ENCODE measurements at regions of chr11 and their contacts with region 1.

Region 1: DNA sequence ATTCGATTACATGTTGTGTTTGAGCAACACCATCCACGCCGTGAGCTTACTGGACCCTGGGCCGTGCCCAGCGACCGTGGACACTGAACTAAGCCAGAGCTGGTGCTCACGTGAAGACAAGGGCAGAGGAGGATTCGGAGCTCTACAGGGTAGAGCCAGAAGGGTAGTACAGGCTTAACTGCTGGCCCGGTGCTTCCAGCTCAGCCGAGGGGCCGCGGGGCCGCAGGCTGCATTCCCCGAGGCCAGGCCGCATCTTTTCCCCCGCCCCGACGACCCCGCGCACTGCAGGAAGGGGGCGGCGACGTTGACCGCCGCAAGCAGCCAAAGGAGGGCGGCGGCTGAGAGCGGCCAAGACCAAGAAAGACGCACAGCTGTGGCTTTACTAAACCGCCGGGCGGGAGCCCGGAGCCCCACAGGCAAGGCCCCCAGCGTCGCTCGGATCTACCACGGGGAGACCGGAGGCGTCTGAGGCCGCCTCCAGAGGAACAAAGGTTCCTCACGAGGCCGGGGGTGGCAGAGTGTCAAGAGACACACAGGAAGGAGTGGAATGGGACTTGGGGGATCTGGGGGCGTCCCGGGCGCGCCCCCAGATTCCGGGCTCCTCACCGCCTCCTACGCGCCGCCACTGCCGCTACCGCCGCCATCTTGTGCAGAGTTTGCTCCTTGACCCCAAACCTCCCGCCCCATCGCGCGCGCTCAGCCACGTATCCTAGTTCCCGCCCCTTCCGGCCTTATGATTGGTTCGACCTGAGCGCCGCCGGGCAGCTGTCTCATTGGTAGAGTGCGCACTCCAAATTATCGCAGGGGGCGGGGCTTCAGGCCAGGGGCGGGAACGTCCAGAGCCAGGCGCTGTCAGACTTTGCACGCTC is at the start of gene GANAB:
- DNase-seq: peak; percentile 97 to 100 (median 99)
- ATAC-seq: peak; percentile 98
- H3K4me3 ChIP-seq: peak within 1 kb of the TSS; percentile 98
- H3K4me3 Mint-ChIP-seq: peak within 1 kb of the TSS; percentile 96
- H3K27ac ChIP-seq: peak within 1 kb of the TSS; percentile 82 to 97
- H3K27ac Mint-ChIP-seq: peak within 1 kb of the TSS; percentile 99
- H3K4me1 ChIP-seq: peaks cover 42% of the 10 kb centered on the region
- H3K4me1 Mint-ChIP-seq: peaks cover 29% of the 10 kb centered on the region
- H3K27me3 ChIP-seq: no peaks in the 10 kb centered on the region
- H3K27me3 Mint-ChIP-seq: no peaks in the 10 kb centered on the region
- CTCF ChIP-seq: no peak
- total RNA-seq, gene GANAB: 181 to 182 TPM

Region 2: GRCh38 chr11:62256281-62256680 is 389.9 kb before region 1 on chr11:
- CTCF ChIA-PET with region 1: no interaction called
- POLR2A ChIA-PET with region 1: no interaction called
- intact Hi-C with region 1: no loop called
- DNase-seq: no peak
- ATAC-seq: no peak
- H3K4me3 ChIP-seq: no peak overlapping the region
- H3K4me3 Mint-ChIP-seq: no peak overlapping the region
- H3K27ac ChIP-seq: no peak overlapping the region
- H3K27ac Mint-ChIP-seq: no peak overlapping the region
- H3K4me1 ChIP-seq: no peaks in the 10 kb centered on the region
- H3K4me1 Mint-ChIP-seq: no peaks in the 10 kb centered on the region
- H3K27me3 ChIP-seq: no peaks in the 10 kb centered on the region
- H3K27me3 Mint-ChIP-seq: peaks cover 30% of the 10 kb centered on the region
- CTCF ChIP-seq: no peak

Region 3: DNA sequence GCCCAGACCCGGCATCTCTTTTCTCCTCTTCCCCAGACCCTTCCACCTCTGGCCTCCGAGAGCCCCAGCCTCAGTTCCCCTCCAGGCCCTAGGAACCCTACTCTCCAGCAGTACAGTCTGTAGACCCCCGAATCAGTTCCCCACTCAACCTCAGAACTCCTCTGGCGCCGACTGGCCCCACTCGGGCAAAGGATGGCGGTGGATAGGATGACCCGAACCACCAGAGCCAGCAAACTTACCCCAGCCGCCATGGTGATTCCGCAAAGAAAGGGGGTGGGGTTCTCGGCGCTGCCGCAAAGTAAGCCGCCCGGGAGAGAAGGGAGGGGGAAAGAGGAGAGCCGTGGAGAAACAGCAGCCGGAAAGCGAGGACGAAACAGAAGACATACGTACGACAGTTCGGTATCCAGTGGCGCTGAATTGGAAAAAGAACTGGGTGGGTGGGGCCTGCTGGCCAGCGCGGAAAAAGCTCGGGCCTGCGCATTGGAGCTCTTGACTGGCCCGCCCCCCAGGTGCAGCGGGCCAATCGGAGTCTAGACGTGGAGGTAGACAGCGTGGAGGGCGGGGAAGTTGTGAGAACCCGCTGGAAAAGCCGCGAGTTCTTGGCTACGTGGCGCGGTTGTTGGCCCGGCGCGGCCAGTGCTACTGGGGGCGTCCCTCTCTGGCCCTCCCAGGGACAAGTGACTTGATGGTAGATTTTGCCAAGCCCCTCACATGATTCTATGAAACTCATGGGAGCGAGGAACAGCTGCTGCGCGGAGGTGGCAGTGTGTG is 72.4 kb before region 1 on chr11 and contains the start of gene EEF1G:
- CTCF ChIA-PET with region 1: no interaction called
- POLR2A ChIA-PET with region 1: interaction called, 13 read pairs
- intact Hi-C with region 1: no loop called
- DNase-seq: peak; percentile 95 to 100 (median 97)
- ATAC-seq: peak; percentile 94
- H3K4me3 ChIP-seq: peak within 1 kb of the TSS; percentile 82
- H3K4me3 Mint-ChIP-seq: peak within 1 kb of the TSS; percentile 93
- H3K27ac ChIP-seq: peak within 1 kb of the TSS; percentile 76 to 83
- H3K27ac Mint-ChIP-seq: peak within 1 kb of the TSS; percentile 89
- H3K4me1 ChIP-seq: peaks cover 48% of the 10 kb centered on the region
- H3K4me1 Mint-ChIP-seq: peaks cover 55% of the 10 kb centered on the region
- H3K27me3 ChIP-seq: no peaks in the 10 kb centered on the region
- H3K27me3 Mint-ChIP-seq: no peaks in the 10 kb centered on the region
- CTCF ChIP-seq: no peak
- total RNA-seq, gene EEF1G: 2,181 to 2,269 TPM

Region 4: DNA sequence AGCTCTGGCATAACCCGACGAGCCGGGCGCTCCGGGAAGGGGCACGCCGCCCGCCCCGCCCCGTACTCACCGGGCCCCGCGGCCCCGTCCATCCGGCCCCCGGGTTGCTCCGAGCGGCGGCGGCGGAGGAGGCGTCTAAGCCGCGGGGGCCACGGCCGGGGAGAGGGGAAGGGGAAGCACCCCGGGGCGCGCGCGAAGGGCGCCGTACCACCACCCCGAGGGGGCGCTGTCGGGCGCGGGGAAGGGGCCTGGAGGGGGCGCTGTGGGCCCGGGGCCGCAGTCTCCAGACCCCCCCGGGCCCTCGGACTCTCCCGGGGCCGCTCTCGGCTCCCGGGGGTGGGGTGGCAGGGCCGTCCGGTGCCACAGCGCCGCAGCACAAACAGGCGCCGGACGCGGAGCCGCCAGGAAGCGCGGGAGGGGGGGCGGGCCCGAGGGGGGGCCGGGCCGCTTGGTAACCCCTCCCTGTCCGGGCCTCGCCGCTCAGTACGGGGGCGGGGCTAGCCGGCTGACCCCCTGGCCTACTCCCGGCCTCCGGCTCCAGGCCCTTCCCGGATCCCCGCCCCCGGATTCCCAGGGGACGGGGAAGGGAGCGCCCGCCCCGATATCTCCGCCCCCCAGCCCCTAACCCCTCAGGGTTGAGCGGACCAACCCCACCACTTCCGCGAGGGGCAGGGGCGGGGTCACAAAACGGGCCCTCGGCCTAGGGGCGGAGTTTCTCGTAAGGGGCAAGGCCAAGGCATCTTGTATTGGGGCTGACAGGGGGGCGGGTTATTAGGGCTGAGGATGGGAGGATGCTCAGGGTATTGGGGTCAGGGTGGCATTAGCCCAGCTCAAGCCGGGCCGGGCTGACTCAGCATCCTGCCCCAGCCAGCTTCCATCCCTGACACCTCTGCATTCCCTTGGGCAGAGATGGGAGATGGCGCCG is 33.6 kb before region 1 on chr11 and contains the starts of genes EML3 and ROM1:
- CTCF ChIA-PET with region 1: interaction called, 3 read pairs
- POLR2A ChIA-PET with region 1: interaction called, 5 read pairs
- intact Hi-C with region 1: loop called (anchors 1 to 5 kb)
- DNase-seq: peak; percentile 77 to 94 (median 89)
- ATAC-seq: peak; percentile 76
- H3K4me3 ChIP-seq: peak within 1 kb of the TSS; percentile 92
- H3K4me3 Mint-ChIP-seq: peak within 1 kb of the TSS; percentile 90
- H3K27ac ChIP-seq: peak within 1 kb of the TSS; percentile 78 to 90
- H3K27ac Mint-ChIP-seq: peak within 1 kb of the TSS; percentile 94
- H3K4me1 ChIP-seq: peaks cover 63% of the 10 kb centered on the region
- H3K4me1 Mint-ChIP-seq: peaks cover 44% of the 10 kb centered on the region
- H3K27me3 ChIP-seq: no peaks in the 10 kb centered on the region
- H3K27me3 Mint-ChIP-seq: no peaks in the 10 kb centered on the region
- CTCF ChIP-seq: peak; percentile 87
- total RNA-seq, gene EML3: 142 to 144 TPM
- total RNA-seq, gene ROM1: 0.42 to 0.71 TPM

Region 5: DNA sequence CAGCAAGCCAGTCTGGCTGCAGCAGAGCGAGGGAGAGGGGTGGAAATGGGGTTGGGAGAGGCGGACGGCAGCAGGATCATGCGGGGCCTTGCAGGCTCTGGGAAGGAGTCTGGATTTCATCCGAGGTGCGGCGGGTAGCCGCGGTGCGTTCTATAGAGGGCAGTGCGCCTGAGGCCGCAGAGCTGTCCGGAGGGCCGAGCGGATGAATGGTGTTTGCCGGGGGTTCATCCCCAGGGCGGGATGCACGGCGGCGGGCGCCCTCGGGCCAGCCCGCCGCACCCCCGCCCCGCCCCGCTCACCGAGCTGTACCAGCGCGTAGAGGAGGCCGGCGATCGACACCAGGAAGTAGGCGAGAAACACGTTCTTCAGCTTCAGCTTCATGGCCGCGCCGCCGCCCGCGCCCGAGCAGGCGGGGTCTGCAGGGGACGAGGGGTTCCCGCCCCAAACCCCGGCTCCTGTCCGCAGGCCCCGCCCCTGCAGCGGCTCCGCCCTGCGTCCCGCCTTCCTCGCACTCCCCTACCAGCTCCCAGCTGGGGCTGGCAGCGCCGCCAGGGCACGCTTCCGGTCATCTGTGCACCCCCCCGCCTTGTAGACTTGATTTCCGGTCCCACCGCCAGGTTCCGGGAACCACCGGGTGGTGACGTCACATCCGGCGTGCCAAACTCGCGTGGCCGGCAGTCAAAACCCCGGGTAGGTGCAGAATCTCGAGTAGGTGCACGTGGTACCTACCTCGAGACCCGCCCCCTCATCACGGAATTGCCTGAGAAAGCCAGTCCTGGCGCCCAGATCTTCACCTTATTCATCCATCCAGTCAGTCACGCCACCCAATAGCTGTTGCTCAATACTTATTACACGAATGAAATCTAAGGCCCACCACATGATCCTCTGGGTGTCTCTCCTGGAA is 24.4 kb before region 1 on chr11 and contains the start of gene B3GAT3:
- CTCF ChIA-PET with region 1: interaction called, 3 read pairs
- POLR2A ChIA-PET with region 1: interaction called, 37 read pairs
- intact Hi-C with region 1: loop called in 1 of 2 experiments (anchors 2 kb)
- DNase-seq: peak; percentile 91 to 99 (median 95)
- ATAC-seq: peak; percentile 82
- H3K4me3 ChIP-seq: peak within 1 kb of the TSS; percentile 69
- H3K4me3 Mint-ChIP-seq: peak within 1 kb of the TSS; percentile 95
- H3K27ac ChIP-seq: peak within 1 kb of the TSS; percentile 86 to 88
- H3K27ac Mint-ChIP-seq: peak within 1 kb of the TSS; percentile 89
- H3K4me1 ChIP-seq: peaks cover 32% of the 10 kb centered on the region
- H3K4me1 Mint-ChIP-seq: peaks cover 27% of the 10 kb centered on the region
- H3K27me3 ChIP-seq: no peaks in the 10 kb centered on the region
- H3K27me3 Mint-ChIP-seq: no peaks in the 10 kb centered on the region
- CTCF ChIP-seq: no peak
- total RNA-seq, gene B3GAT3: 47.2 to 49.5 TPM

Region 6: DNA sequence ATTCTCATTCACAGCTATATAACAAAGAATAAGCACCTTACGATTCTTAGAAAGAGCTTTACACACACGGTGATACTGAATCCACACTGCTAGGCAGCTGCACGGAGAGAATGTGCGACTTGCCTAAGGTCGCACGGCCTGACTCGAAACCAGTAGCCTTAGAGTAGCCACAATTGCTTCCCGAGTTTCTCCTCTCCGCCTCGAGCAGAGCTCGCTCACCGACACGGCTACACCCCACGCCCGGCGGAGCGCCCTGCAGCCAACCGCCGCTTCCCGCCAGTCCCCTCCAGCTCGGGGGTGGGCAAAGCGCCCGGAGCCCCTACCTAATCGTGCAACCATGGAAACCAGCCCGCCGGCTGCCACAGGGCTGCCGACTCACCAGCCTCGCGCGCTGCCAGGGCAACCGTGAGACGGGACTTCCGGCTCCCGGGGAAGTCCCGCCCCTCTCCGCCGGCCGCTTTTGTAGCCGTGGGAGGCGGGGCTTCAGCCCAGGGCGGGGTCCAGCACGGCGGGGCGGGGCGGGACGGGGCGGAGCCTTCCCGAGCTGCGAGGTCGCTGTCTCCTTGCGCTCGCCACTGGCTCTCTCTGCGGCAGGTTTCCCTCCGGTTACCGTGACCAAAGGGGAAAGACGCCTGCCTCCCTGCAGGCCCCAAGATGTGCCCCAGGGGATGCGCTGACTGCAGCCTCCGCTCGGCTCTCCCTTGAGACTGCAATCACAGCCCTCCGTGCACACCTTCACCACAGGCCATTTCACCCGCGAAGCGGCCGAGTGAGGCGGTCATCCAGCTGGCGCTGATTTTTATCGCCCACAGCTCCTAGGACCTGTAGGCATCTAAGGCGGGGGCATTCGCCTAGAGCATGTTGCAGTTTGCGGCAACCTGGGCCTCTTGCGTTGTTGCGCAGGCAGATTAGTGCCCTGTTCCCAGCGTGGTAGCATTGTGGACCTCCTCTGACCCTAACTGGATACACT is 60.0 kb after region 1 on chr11:
- CTCF ChIA-PET with region 1: no interaction called
- POLR2A ChIA-PET with region 1: interaction called, 12 read pairs
- intact Hi-C with region 1: loop called in 1 of 2 experiments (anchors 2 kb)
- DNase-seq: peak; percentile 90 to 97 (median 94)
- ATAC-seq: peak; percentile 62
- H3K4me3 ChIP-seq: peak overlapping the region; percentile 79
- H3K4me3 Mint-ChIP-seq: peak overlapping the region; percentile 86
- H3K27ac ChIP-seq: peak overlapping the region; percentile 65 to 84
- H3K27ac Mint-ChIP-seq: peak overlapping the region; percentile 92
- H3K4me1 ChIP-seq: peaks cover 49% of the 10 kb centered on the region
- H3K4me1 Mint-ChIP-seq: peaks cover 42% of the 10 kb centered on the region
- H3K27me3 ChIP-seq: no peaks in the 10 kb centered on the region
- H3K27me3 Mint-ChIP-seq: no peaks in the 10 kb centered on the region
- CTCF ChIP-seq: no peak

Region 7: GRCh38 chr11:62737196-62737595 is 91.0 kb after region 1 on chr11:
- CTCF ChIA-PET with region 1: no interaction called
- POLR2A ChIA-PET with region 1: no interaction called
- intact Hi-C with region 1: no loop called
- DNase-seq: no peak
- ATAC-seq: no peak
- H3K4me3 ChIP-seq: no peak overlapping the region
- H3K4me3 Mint-ChIP-seq: no peak overlapping the region
- H3K27ac ChIP-seq: no peak overlapping the region
- H3K27ac Mint-ChIP-seq: no peak overlapping the region
- H3K4me1 ChIP-seq: peaks cover 5% of the 10 kb centered on the region
- H3K4me1 Mint-ChIP-seq: peaks cover 8% of the 10 kb centered on the region
- H3K27me3 ChIP-seq: no peaks in the 10 kb centered on the region
- H3K27me3 Mint-ChIP-seq: no peaks in the 10 kb centered on the region
- CTCF ChIP-seq: no peak

Measured in CD4-positive, alpha-beta T cell (primary cell).